ENCODE measurements at regions of chr6 and their contacts with region 1.

Region 1: GRCh38 chr6:142845624-142846458 is 99.1 kb downstream of the HIVEP2 start:
- DNase-seq: peak; percentile 71
- ATAC-seq: peak; percentile 29
- H3K4me3 Mint-ChIP-seq: peak overlapping the region; percentile 67
- H3K27ac Mint-ChIP-seq: peak overlapping the region; percentile 92
- H3K4me1 Mint-ChIP-seq: peaks cover 88% of the 10 kb centered on the region
- H3K27me3 Mint-ChIP-seq: no peaks in the 10 kb centered on the region
- CTCF ChIP-seq: no peak

Region 2: GRCh38 chr6:142728910-142729481 is 116.8 kb before region 1 on chr6:
- CTCF ChIA-PET with region 1: no interaction called
- POLR2A ChIA-PET with region 1: no interaction called
- intact Hi-C with region 1: no loop called
- DNase-seq: no peak
- ATAC-seq: no peak
- H3K4me3 Mint-ChIP-seq: peak overlapping the region; percentile 18
- H3K27ac Mint-ChIP-seq: no peak overlapping the region
- H3K4me1 Mint-ChIP-seq: peaks cover 25% of the 10 kb centered on the region
- H3K27me3 Mint-ChIP-seq: no peaks in the 10 kb centered on the region
- CTCF ChIP-seq: no peak

Region 3: DNA sequence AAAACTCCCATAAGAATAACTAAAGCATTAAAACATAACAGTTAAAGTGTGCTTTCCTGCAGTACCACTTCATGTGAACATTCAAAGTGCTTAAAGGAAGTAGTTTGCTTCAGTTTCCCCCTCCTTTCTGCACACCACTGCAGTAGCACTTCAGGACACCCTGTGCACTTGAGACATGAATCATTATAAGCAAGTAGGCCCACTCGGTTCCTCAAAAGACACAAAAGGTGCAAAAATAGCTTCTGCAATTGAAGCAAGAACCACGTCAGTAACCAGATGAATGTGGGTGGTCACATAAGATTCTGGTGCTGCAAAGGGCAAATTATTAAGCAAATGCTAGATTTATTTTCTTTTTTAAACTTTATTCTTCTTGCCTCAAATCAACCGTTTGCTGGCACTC is 61.5 kb before region 1 on chr6:
- CTCF ChIA-PET with region 1: no interaction called
- POLR2A ChIA-PET with region 1: interaction called, 4 read pairs
- intact Hi-C with region 1: loop called (anchors 5 kb)
- DNase-seq: peak; percentile 58
- ATAC-seq: peak; percentile 95
- H3K4me3 Mint-ChIP-seq: peak overlapping the region; percentile 18
- H3K27ac Mint-ChIP-seq: peak overlapping the region; percentile 94
- H3K4me1 Mint-ChIP-seq: peaks cover 72% of the 10 kb centered on the region
- H3K27me3 Mint-ChIP-seq: no peaks in the 10 kb centered on the region
- CTCF ChIP-seq: no peak

Region 4: DNA sequence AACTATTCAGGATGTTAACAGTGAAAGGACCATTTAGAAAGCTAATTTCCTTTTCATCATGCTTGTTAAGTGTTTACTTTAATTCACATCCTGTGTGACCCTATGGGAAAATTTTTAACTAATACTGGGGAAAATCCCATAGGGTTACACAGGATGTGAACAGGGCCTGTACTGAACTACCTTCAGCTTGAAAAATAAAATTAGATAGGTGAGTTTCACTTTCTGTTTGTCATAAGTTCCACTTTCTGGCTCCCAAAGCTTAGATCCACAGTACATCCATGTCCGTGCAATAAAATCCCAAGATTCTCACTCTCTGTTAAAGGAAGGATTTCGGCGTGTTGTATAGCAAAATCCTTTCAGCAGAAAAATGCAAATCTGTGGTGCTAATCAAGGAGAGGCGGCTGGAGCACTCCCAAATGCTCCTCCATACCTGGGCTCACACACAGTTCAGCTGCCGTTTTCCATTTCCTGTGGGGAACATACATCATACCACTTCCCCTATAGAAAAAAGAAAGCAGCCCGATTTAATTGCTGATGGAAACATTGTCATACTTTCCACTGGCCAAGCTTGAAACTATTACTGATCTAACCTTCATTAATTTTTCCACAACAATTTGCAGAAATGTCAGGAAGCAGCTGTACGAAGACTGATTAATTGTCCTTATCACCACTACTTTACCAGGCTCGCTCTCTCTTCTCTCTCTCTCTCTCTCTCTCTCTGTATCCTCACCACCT is 26.1 kb before region 1 on chr6:
- CTCF ChIA-PET with region 1: interaction called, 3 read pairs
- POLR2A ChIA-PET with region 1: interaction called, 18 read pairs
- intact Hi-C with region 1: loop called (anchors 1 kb)
- DNase-seq: peak; percentile 71
- ATAC-seq: peak; percentile 63
- H3K4me3 Mint-ChIP-seq: peak overlapping the region; percentile 85
- H3K27ac Mint-ChIP-seq: peak overlapping the region; percentile 98
- H3K4me1 Mint-ChIP-seq: peaks cover 80% of the 10 kb centered on the region
- H3K27me3 Mint-ChIP-seq: no peaks in the 10 kb centered on the region
- CTCF ChIP-seq: no peak

Region 5: GRCh38 chr6:142857233-142857761 is 11.5 kb after region 1 on chr6:
- CTCF ChIA-PET with region 1: interaction called, 4 read pairs
- POLR2A ChIA-PET with region 1: interaction called, 29 read pairs
- intact Hi-C with region 1: loop called (anchors 2 kb)
- DNase-seq: peak; percentile 37
- ATAC-seq: peak; percentile 7
- H3K4me3 Mint-ChIP-seq: peak overlapping the region; percentile 69
- H3K27ac Mint-ChIP-seq: peak overlapping the region; percentile 85
- H3K4me1 Mint-ChIP-seq: peaks cover 90% of the 10 kb centered on the region
- H3K27me3 Mint-ChIP-seq: no peaks in the 10 kb centered on the region
- CTCF ChIP-seq: no peak

Region 6: DNA sequence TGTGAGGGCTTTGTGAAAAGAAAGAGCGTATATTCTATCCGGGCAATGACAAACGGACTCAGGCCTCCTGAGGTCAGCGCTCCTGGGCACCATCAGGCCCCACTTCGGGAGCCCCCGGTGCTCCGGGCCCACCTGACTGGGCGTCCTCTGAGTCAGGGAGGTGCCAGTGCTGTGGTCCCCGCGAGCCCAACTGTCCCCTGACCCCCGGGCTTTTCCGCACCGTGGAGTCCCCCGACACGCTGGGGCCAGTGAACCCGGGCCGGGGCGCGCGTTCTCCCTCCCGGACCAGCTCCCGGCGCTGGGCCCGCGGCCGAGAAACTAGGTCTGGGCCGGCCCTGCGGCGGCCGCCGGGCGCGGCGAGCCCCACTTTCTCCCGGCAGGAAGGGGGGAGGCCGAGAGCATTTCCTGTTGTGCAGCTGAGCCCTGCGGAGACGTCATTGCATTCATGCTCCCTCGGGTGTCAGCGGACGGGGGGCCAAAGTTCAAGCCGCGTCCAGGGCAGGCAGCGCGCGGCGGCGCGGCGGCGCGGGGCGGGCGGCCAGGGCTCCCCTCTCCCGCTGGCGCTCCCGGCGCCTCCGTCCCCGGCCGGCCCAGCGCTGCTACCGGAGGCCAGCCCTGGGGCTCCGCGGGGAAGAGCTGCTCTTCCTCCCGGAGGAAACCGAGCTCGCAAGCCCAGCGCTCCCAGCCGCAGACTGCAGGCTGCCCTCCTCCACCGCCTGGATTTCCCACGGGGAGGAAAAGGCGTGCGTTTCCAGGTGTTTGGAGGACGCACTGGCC is 80.8 kb after region 1 on chr6:
- CTCF ChIA-PET with region 1: interaction called, 4 read pairs
- POLR2A ChIA-PET with region 1: interaction called, 10 read pairs
- intact Hi-C with region 1: loop called (anchors 5 kb)
- DNase-seq: peak; percentile 90
- ATAC-seq: peak; percentile 85
- H3K4me3 Mint-ChIP-seq: peak overlapping the region; percentile 96
- H3K27ac Mint-ChIP-seq: peak overlapping the region; percentile 97
- H3K4me1 Mint-ChIP-seq: peaks cover 55% of the 10 kb centered on the region
- H3K27me3 Mint-ChIP-seq: no peaks in the 10 kb centered on the region
- CTCF ChIP-seq: no peak